ENCODE measurements at regions of chr1 and their contacts with region 1.

Region 1: DNA sequence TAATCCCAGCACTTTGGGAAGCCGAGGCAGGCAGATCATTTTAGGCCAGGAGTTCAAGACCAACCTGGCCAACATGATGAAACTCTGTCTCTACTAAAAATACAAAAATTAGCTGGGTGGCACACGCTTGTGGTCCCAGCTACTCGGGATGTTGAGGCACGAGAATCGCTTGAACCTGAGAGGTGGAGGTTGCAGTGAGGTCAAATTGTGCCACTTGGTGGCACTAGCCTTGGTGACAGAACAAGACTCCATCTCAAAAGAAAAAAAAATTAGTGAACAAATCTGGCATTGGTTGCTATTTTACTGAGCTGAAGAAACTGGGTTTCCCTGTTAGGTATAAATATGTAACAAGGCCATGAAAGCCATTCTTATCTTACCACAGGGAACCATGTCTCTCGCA is 26.9 kb upstream of the PSMD4 start:
- DNase-seq: no peak
- H3K4me3 ChIP-seq: no peak overlapping the region
- H3K27ac ChIP-seq: no peak overlapping the region
- H3K4me1 ChIP-seq: no peaks in the 10 kb centered on the region
- H3K27me3 ChIP-seq: no peaks in the 10 kb centered on the region
- CTCF ChIP-seq: no peak
- POLR2A ChIP-seq: no peak

Region 2: DNA sequence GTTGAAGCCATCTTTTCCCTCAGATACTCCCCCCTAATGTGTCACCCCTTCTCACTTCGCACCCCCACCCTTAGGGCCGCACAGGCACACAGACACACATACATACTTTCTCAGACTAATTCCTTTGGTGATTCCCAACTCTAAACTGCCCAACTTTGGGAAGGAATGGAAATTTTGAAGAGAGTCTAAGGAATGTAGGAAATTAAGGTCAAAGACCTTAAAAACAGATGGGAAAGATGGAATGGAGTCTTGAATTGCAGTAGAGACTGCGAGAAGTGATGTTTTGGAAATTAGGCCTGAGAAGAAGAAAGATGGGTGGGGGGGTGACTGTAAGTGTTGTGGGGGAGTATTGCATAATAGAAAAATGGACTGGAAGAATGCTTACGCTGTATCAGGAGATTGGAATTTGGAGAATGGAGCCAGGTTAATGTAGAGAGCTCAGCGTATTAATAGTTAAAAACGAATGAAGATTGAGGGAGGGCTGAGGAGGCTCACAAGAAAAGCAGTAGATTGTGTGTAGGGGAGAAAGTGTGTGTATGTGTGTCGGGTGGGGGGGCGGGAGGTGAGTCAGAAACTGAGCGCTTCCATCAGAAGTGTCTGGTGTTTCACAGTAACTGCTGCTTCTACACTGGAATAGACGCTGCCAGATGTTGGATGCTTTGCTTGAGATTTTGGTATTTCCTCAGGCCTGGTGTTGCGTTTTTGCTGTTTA is 27.6 kb before region 1 on chr1:
- intact Hi-C with region 1: no loop called
- DNase-seq: no peak
- H3K4me3 ChIP-seq: peak overlapping the region; percentile 65 to 85 (median 82)
- H3K27ac ChIP-seq: peak overlapping the region; percentile 92 to 96
- H3K4me1 ChIP-seq: peaks cover 0 to 9% of the 10 kb centered on the region in 2 donors
- H3K27me3 ChIP-seq: no peaks in the 10 kb centered on the region
- CTCF ChIP-seq: no peak
- POLR2A ChIP-seq: no peak

Region 3: GRCh38 chr1:151243683-151244216 is 16.1 kb after region 1 on chr1:
- intact Hi-C with region 1: no loop called
- DNase-seq: no peak
- H3K4me3 ChIP-seq: no peak overlapping the region
- H3K27ac ChIP-seq: no peak overlapping the region
- H3K4me1 ChIP-seq: no peaks in the 10 kb centered on the region
- H3K27me3 ChIP-seq: no peaks in the 10 kb centered on the region
- CTCF ChIP-seq: no peak
- POLR2A ChIP-seq: no peak

Region 4: GRCh38 chr1:151254217-151255213 is 26.9 kb after region 1 on chr1 and contains the start of gene PSMD4:
- intact Hi-C with region 1: loop called (anchors 1 kb)
- DNase-seq: peak; percentile 95 to 96
- H3K4me3 ChIP-seq: peak within 1 kb of the TSS; percentile 90 to 99 (median 92)
- H3K27ac ChIP-seq: peak within 1 kb of the TSS; percentile 92 to 98
- H3K4me1 ChIP-seq: peaks cover 4 to 7% of the 10 kb centered on the region in 2 donors
- H3K27me3 ChIP-seq: no peaks in the 10 kb centered on the region
- CTCF ChIP-seq: no peak
- POLR2A ChIP-seq: peak; percentile 92
- total RNA-seq, gene PSMD4: 108 to 188 (median 140) TPM